ENCODE measurements at regions of chr1 and their contacts with region 1.

Region 1: GRCh38 chr1:222617367-222617951 is 438 bp upstream of the MIA3 start:
- DNase-seq: peak; percentile 81 to 98 (median 89)
- ATAC-seq: peak; percentile 93
- H3K4me3 ChIP-seq: peak overlapping the region; percentile 74
- H3K4me3 Mint-ChIP-seq: peak overlapping the region; percentile 89 to 95 (median 93)
- H3K27ac ChIP-seq: peak overlapping the region; percentile 74
- H3K27ac Mint-ChIP-seq: peak overlapping the region; percentile 90 to 97 (median 95)
- H3K4me1 ChIP-seq: peaks cover 18 to 22% of the 10 kb centered on the region in 2 donors
- H3K4me1 Mint-ChIP-seq: peaks cover 14 to 39% (median 32%) of the 10 kb centered on the region in 7 donors
- H3K27me3 ChIP-seq: no peaks in the 10 kb centered on the region
- H3K27me3 Mint-ChIP-seq: peaks cover 5 to 51% (median 26%) of the 10 kb centered on the region in 5 donors

Region 2: GRCh38 chr1:222357252-222357651 is 260.2 kb before region 1 on chr1:
- CTCF ChIA-PET with region 1: no interaction called
- POLR2A ChIA-PET with region 1: no interaction called
- intact Hi-C with region 1: no loop called
- DNase-seq: no peak
- ATAC-seq: no peak
- H3K4me3 ChIP-seq: no peak overlapping the region
- H3K4me3 Mint-ChIP-seq: no peak overlapping the region
- H3K27ac ChIP-seq: no peak overlapping the region
- H3K27ac Mint-ChIP-seq: no peak overlapping the region
- H3K4me1 ChIP-seq: no peaks in the 10 kb centered on the region
- H3K4me1 Mint-ChIP-seq: peaks cover 0 to 12% (median 0%) of the 10 kb centered on the region in 7 donors
- H3K27me3 ChIP-seq: no peaks in the 10 kb centered on the region
- H3K27me3 Mint-ChIP-seq: no peaks in the 10 kb centered on the region

Region 3: GRCh38 chr1:222579316-222579715 is 38.1 kb before region 1 on chr1:
- CTCF ChIA-PET with region 1: no interaction called
- POLR2A ChIA-PET with region 1: no interaction called
- intact Hi-C with region 1: no loop called
- DNase-seq: no peak
- ATAC-seq: no peak
- H3K4me3 ChIP-seq: no peak overlapping the region
- H3K4me3 Mint-ChIP-seq: no peak overlapping the region
- H3K27ac ChIP-seq: no peak overlapping the region
- H3K27ac Mint-ChIP-seq: no peak overlapping the region
- H3K4me1 ChIP-seq: no peaks in the 10 kb centered on the region
- H3K4me1 Mint-ChIP-seq: peaks cover 2 to 23% (median 10%) of the 10 kb centered on the region in 7 donors
- H3K27me3 ChIP-seq: no peaks in the 10 kb centered on the region
- H3K27me3 Mint-ChIP-seq: no peaks in the 10 kb centered on the region

Region 4: DNA sequence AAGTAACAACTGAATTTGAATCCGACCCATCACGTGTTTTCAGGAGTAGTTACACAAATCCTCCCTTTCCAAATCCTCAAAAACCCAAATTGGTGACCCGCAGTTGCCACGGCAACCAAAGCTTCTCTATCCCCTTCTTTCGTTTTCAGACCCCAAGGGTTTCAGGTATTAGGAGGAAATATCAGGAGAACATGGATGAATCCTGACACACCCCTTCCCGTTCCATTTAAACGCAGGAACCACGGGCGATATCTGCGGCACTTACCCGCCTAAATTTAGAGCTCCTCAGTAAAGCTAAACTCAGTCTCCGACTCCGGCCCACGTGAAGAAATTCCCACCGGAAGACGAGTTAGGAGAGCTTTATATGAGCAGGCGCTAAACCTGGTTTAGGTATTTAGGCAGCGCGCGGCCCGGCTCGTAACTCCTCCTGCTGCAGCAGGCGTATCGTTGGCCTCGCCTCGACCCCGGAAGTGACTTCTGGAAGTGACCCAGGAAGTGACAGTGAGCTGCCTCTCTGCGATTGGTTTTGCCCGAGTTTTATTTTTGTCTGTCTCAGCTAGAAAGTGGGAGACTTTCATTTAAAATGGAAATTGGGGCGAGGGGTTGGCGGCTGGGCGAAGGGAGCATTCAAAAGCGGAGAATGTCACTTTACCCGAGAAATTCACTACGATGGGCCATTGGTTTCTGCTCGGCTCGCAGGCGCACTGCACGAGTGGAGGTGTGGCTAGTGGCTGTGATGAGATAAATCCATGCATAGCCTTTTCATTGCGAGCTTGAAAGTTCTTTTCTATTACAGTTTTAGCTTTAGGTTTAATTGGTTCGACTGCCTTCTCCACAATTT is 27.8 kb before region 1 on chr1 and contains the start of gene TAF1A:
- CTCF ChIA-PET with region 1: no interaction called
- POLR2A ChIA-PET with region 1: interaction called, 7 read pairs
- intact Hi-C with region 1: loop called (anchors 1 kb)
- DNase-seq: peak; percentile 53 to 92 (median 87)
- ATAC-seq: peak; percentile 100
- H3K4me3 ChIP-seq: peak within 1 kb of the TSS; percentile 93
- H3K4me3 Mint-ChIP-seq: peak within 1 kb of the TSS; percentile 86 to 99 (median 96)
- H3K27ac ChIP-seq: peak within 1 kb of the TSS; percentile 85
- H3K27ac Mint-ChIP-seq: peak within 1 kb of the TSS; percentile 94 to 99 (median 97)
- H3K4me1 ChIP-seq: peaks cover 6 to 18% of the 10 kb centered on the region in 2 donors
- H3K4me1 Mint-ChIP-seq: peaks cover 21 to 68% (median 57%) of the 10 kb centered on the region in 7 donors
- H3K27me3 ChIP-seq: no peaks in the 10 kb centered on the region
- H3K27me3 Mint-ChIP-seq: peaks cover 0 to 4% (median 0%) of the 10 kb centered on the region in 5 donors
- total RNA-seq, gene TAF1A: 6.5 to 17.9 (median 9.3) TPM

Region 5: DNA sequence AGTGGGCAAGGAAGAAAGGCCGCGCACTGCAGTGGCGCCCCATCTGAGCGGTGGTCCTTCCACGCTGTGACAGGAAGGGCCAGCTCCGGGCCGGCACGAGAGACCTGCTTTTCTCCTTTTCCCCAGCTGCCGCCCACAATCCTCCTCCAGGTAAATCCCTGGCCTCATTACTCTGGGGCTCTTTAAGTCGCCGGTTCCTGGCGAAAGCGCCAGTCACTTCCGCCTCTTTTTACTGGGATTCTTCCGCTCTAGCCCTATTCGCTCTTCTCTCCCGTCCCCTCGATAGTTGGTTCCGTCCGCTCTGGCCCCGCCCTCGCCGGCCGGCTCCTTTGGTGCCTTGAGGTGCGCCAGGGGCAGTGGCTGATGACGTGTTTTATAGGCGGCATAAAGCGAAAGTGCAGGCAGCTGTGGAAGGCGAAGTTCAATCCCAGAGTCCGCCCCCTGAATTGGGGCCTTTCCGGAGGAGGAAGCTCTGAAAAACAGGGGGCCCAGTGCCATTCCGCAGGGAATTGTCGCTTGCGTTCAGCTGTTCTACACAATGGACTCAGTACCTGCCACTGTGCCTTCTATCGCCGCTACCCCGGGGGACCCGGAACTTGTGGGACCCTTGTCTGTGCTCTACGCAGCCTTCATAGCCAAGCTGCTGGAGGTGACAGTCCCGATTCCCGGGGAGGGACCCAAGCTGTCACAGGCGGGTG is 26.6 kb after region 1 on chr1:
- CTCF ChIA-PET with region 1: interaction called, 3 read pairs
- POLR2A ChIA-PET with region 1: interaction called, 29 read pairs
- intact Hi-C with region 1: loop called (anchors 1 kb)
- DNase-seq: peak; percentile 93 to 98 (median 96)
- ATAC-seq: peak; percentile 97
- H3K4me3 ChIP-seq: peak overlapping the region; percentile 99
- H3K4me3 Mint-ChIP-seq: peak overlapping the region; percentile 87 to 99 (median 97)
- H3K27ac ChIP-seq: peak overlapping the region; percentile 92
- H3K27ac Mint-ChIP-seq: peak overlapping the region; percentile 95 to 99 (median 98)
- H3K4me1 ChIP-seq: peaks cover 12% of the 10 kb centered on the region in 2 donors
- H3K4me1 Mint-ChIP-seq: peaks cover 12 to 59% (median 49%) of the 10 kb centered on the region in 7 donors
- H3K27me3 ChIP-seq: no peaks in the 10 kb centered on the region
- H3K27me3 Mint-ChIP-seq: no peaks in the 10 kb centered on the region

Region 6: DNA sequence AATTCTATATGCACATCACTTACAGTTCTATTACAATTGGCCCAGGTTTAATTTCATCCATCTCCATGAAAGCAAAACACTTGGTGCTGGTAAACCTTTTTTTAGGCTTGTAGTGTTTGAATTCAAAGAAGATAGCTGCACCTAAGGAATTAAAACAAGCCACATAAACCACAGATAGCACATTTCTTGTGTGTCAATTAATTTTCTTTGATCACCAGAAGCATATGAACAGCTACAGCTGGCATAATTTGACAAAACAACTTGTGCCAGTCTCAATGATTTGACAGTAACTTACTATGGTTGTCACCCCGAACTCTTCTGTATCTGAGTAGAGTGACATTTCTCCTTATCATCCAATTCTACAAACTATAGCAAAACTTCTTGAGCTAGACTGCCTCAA is 52.7 kb after region 1 on chr1:
- CTCF ChIA-PET with region 1: no interaction called
- POLR2A ChIA-PET with region 1: no interaction called
- intact Hi-C with region 1: no loop called
- DNase-seq: peak in 4 of 9 donors; percentile 22 to 48 (median 32)
- ATAC-seq: peak; percentile 31
- H3K4me3 ChIP-seq: no peak overlapping the region
- H3K4me3 Mint-ChIP-seq: peak overlapping the region in 7 of 10 donors; percentile 6 to 68 (median 49)
- H3K27ac ChIP-seq: peak overlapping the region; percentile 28
- H3K27ac Mint-ChIP-seq: peak overlapping the region; percentile 65 to 91 (median 89)
- H3K4me1 ChIP-seq: peaks cover 0 to 10% of the 10 kb centered on the region in 2 donors
- H3K4me1 Mint-ChIP-seq: peaks cover 15 to 32% (median 26%) of the 10 kb centered on the region in 7 donors
- H3K27me3 ChIP-seq: no peaks in the 10 kb centered on the region
- H3K27me3 Mint-ChIP-seq: no peaks in the 10 kb centered on the region

Region 7: GRCh38 chr1:222814536-222815439 is 197.3 kb after region 1 on chr1 and contains the start of gene DISP1:
- CTCF ChIA-PET with region 1: no interaction called
- POLR2A ChIA-PET with region 1: no interaction called
- intact Hi-C with region 1: loop called (anchors 1 to 10 kb)
- DNase-seq: peak; percentile 46 to 71 (median 60)
- ATAC-seq: peak; percentile 90
- H3K4me3 ChIP-seq: peak within 1 kb of the TSS; percentile 77
- H3K4me3 Mint-ChIP-seq: peak within 1 kb of the TSS; percentile 87 to 97 (median 95)
- H3K27ac ChIP-seq: peak within 1 kb of the TSS; percentile 78
- H3K27ac Mint-ChIP-seq: peak within 1 kb of the TSS; percentile 79 to 96 (median 89)
- H3K4me1 ChIP-seq: no peaks in the 10 kb centered on the region
- H3K4me1 Mint-ChIP-seq: peaks cover 17 to 37% (median 29%) of the 10 kb centered on the region in 7 donors
- H3K27me3 ChIP-seq: no peaks in the 10 kb centered on the region
- H3K27me3 Mint-ChIP-seq: peaks cover 0 to 13% (median 0%) of the 10 kb centered on the region in 5 donors
- total RNA-seq, gene DISP1: 1.7 to 4.6 (median 3.0) TPM

Region 8: GRCh38 chr1:223363856-223364684 is 746.6 kb after region 1 on chr1 and contains the start of gene SUSD4:
- CTCF ChIA-PET with region 1: no interaction called
- POLR2A ChIA-PET with region 1: interaction called, 3 read pairs
- intact Hi-C with region 1: loop called in 1 of 2 experiments (anchors 10 kb)
- DNase-seq: peak; percentile 54 to 87 (median 81)
- ATAC-seq: peak; percentile 92
- H3K4me3 ChIP-seq: peak within 1 kb of the TSS; percentile 83
- H3K4me3 Mint-ChIP-seq: peak within 1 kb of the TSS; percentile 83 to 96 (median 94)
- H3K27ac ChIP-seq: peak within 1 kb of the TSS; percentile 44
- H3K27ac Mint-ChIP-seq: peak within 1 kb of the TSS in 8 of 9 donors; percentile 61 to 91 (median 72)
- H3K4me1 ChIP-seq: no peaks in the 10 kb centered on the region
- H3K4me1 Mint-ChIP-seq: peaks cover 7 to 29% (median 27%) of the 10 kb centered on the region in 7 donors
- H3K27me3 ChIP-seq: no peaks in the 10 kb centered on the region
- H3K27me3 Mint-ChIP-seq: peaks cover 0 to 68% (median 0%) of the 10 kb centered on the region in 5 donors
- total RNA-seq, gene SUSD4: 0.10 to 20.3 (median 7.1) TPM